GM12878 (cell line): ENCODE measurements at regions of chr5 and their contacts with region 1.

Region 1: DNA sequence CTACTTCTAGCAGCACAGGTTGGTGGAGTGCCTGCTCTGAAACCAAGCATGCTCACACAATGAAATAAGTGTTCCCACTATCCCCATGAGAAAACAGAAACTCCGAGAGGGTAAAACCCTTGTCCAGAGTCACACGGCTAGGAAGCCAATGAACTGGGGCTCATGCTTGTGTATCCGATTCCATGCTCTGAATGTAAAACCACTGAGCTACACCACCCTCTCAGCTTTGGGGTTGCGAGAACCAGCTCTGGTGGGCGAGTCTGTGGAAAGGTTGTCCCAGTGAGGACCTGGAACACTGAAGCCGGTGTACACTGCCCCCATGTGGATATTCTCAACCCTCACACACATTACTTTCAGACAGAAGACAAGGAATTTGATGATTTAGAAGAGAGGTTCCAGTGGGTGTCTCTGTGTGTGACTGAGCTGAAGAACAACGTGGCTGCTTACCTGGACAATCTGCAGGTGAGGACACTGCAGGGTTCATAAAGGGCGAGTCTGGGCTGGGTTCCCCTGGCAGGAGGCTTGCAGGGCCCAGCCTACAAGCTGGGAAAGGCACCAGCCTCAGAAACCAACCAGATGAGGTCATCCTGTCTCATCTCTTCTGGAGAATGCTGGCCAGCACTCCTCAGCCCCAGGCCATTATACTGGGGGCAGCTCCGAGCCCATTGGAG is 37.4 kb downstream of the ARHGEF37 start:
- DNase-seq: peak; percentile 62
- ATAC-seq: peak; percentile 67
- H3K4me3 ChIP-seq: peak overlapping the region; percentile 43; the same call in 1 of the 2 replicates
- H3K27ac ChIP-seq: peak overlapping the region; percentile 59
- H3K4me1 ChIP-seq: peaks cover 31% of the 10 kb centered on the region
- H3K27me3 ChIP-seq: no peaks in the 10 kb centered on the region
- CTCF ChIP-seq: peak; percentile 64 to 81 (median 73)
- EP300 ChIP-seq: no peak
- POLR2A ChIP-seq: no peak
- RAD21 ChIP-seq: peak; percentile 84

Region 2: DNA sequence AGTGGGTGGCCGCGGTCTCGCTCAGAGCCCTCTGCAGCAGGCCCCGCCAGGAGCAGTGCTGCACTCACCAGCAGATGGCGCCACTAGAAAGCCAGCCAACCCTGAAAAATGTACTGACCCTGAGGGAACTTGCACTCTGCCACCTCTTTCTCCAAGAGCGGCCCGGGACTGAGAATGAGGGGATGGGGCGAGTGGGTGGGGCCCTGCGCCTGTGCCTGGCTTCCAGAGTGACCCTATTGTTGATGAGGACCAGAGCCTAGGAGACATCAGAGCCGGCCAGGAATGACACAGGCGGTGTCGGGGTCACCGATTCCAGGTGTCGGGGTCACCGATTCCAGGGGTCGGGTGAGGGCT is 236.8 kb before region 1 on chr5:
- CTCF ChIA-PET with region 1: interaction called, 30 read pairs
- POLR2A ChIA-PET with region 1: no interaction called
- RAD21 ChIA-PET with region 1: interaction called, 7 read pairs
- SMC1A ChIA-PET with region 1: interaction called, 4 read pairs
- in situ Hi-C with region 1: no loop called
- intact Hi-C with region 1: loop called (anchors 5 kb)
- DNase-seq: no peak
- ATAC-seq: peak; percentile 97
- H3K4me3 ChIP-seq: no peak overlapping the region
- H3K27ac ChIP-seq: no peak overlapping the region
- H3K4me1 ChIP-seq: no peaks in the 10 kb centered on the region
- H3K27me3 ChIP-seq: peaks cover 0 to 2% of the 10 kb centered on the region in 2 experiments; a peak in 2 of 4 replicates
- CTCF ChIP-seq: peak; percentile 83 to 90 (median 87)
- EP300 ChIP-seq: no peak
- POLR2A ChIP-seq: no peak
- RAD21 ChIP-seq: peak; percentile 69

Region 3: DNA sequence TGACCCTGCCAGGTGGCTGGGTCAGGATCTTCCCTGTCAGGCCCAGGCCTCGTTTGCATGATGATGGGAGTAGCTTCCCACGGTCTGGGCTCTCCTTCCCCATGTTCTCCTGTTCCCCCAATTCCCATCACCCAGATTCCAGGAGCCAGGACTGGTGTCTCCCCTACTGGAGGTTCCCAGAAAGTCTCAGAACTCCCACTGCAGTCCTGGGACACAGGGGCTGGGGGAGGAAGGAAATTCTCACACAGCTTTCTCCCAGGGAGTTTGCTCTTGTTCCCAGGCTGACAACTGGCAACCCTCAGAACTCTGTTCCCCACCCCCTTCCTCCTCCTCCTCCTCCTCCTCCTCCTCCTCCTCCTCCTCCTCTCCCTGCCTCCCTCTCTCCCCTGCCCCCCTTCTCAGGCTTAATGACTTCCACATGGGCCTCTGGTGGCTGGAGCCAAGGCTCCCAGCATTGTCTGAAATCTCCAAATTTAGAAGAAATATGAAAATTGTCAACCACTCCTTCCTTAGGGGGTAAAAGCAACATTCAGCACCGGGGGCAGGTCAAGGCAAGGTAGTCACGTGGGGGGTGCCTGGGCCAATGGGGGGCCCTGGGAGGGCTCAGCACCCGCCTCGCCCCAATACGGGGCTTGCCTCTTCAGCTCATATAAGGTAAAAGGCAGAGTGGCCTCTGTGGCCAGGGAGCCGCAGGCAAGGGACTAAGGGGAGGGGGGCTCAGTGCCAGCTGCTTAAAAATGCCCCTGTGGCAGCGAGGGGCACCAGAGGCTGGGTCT is 212.3 kb before region 1 on chr5:
- CTCF ChIA-PET with region 1: no interaction called
- POLR2A ChIA-PET with region 1: no interaction called
- RAD21 ChIA-PET with region 1: no interaction called
- SMC1A ChIA-PET with region 1: no interaction called
- in situ Hi-C with region 1: no loop called
- intact Hi-C with region 1: no loop called
- DNase-seq: no peak
- ATAC-seq: peak; percentile 50
- H3K4me3 ChIP-seq: no peak overlapping the region
- H3K27ac ChIP-seq: no peak overlapping the region
- H3K4me1 ChIP-seq: no peaks in the 10 kb centered on the region
- H3K27me3 ChIP-seq: peaks cover 0 to 2% of the 10 kb centered on the region in 2 experiments; a peak in 2 of 4 replicates
- CTCF ChIP-seq: no peak
- EP300 ChIP-seq: no peak
- POLR2A ChIP-seq: no peak
- RAD21 ChIP-seq: no peak

Region 4: GRCh38 chr5:149448831-149449714 is 169.6 kb before region 1 on chr5:
- CTCF ChIA-PET with region 1: interaction called, 108 read pairs
- POLR2A ChIA-PET with region 1: no interaction called
- RAD21 ChIA-PET with region 1: interaction called, 4 read pairs
- SMC1A ChIA-PET with region 1: interaction called, 20 read pairs
- in situ Hi-C with region 1: no loop called
- intact Hi-C with region 1: no loop called
- DNase-seq: no peak
- ATAC-seq: peak; percentile 54
- H3K4me3 ChIP-seq: no peak overlapping the region
- H3K27ac ChIP-seq: no peak overlapping the region
- H3K4me1 ChIP-seq: no peaks in the 10 kb centered on the region
- H3K27me3 ChIP-seq: no peaks in the 10 kb centered on the region
- CTCF ChIP-seq: peak; percentile 17 to 36 (median 18); a peak in 2 of 6 replicates
- EP300 ChIP-seq: no peak
- POLR2A ChIP-seq: no peak
- RAD21 ChIP-seq: peak; percentile 34

Region 5: GRCh38 chr5:149567226-149567625 is 51.5 kb before region 1 on chr5:
- CTCF ChIA-PET with region 1: interaction called, 64 read pairs
- POLR2A ChIA-PET with region 1: interaction called, 3 read pairs
- RAD21 ChIA-PET with region 1: interaction called, 39 read pairs
- SMC1A ChIA-PET with region 1: interaction called, 37 read pairs
- in situ Hi-C with region 1: no loop called
- intact Hi-C with region 1: loop called (anchors 1 kb)
- DNase-seq: no peak
- ATAC-seq: peak; percentile 45
- H3K4me3 ChIP-seq: no peak overlapping the region
- H3K27ac ChIP-seq: no peak overlapping the region
- H3K4me1 ChIP-seq: no peaks in the 10 kb centered on the region
- H3K27me3 ChIP-seq: no peaks in the 10 kb centered on the region
- CTCF ChIP-seq: no peak
- EP300 ChIP-seq: no peak
- POLR2A ChIP-seq: no peak
- RAD21 ChIP-seq: no peak

Region 6: GRCh38 chr5:149596713-149597112 is 22.0 kb before region 1 on chr5:
- CTCF ChIA-PET with region 1: interaction called, 20 read pairs
- POLR2A ChIA-PET with region 1: interaction called, 3 read pairs
- RAD21 ChIA-PET with region 1: interaction called, 6 read pairs
- SMC1A ChIA-PET with region 1: interaction called, 7 read pairs
- in situ Hi-C with region 1: no loop called
- intact Hi-C with region 1: no loop called
- DNase-seq: no peak
- ATAC-seq: no peak
- H3K4me3 ChIP-seq: no peak overlapping the region
- H3K27ac ChIP-seq: no peak overlapping the region
- H3K4me1 ChIP-seq: peaks cover 3% of the 10 kb centered on the region; the same call in 1 of the 2 replicates
- H3K27me3 ChIP-seq: no peaks in the 10 kb centered on the region
- CTCF ChIP-seq: no peak
- EP300 ChIP-seq: no peak
- POLR2A ChIP-seq: no peak
- RAD21 ChIP-seq: no peak

Region 7: GRCh38 chr5:149677731-149678130 is 59.0 kb after region 1 on chr5:
- CTCF ChIA-PET with region 1: no interaction called
- POLR2A ChIA-PET with region 1: no interaction called
- RAD21 ChIA-PET with region 1: no interaction called
- SMC1A ChIA-PET with region 1: no interaction called
- in situ Hi-C with region 1: no loop called
- intact Hi-C with region 1: no loop called
- DNase-seq: peak; percentile 23
- ATAC-seq: peak; percentile 14
- H3K4me3 ChIP-seq: no peak overlapping the region
- H3K27ac ChIP-seq: no peak overlapping the region
- H3K4me1 ChIP-seq: peaks cover 40% of the 10 kb centered on the region
- H3K27me3 ChIP-seq: no peaks in the 10 kb centered on the region
- CTCF ChIP-seq: no peak
- EP300 ChIP-seq: no peak
- POLR2A ChIP-seq: no peak
- RAD21 ChIP-seq: no peak